ENCODE measurements at regions of chr6 and their contacts with region 1.

Region 1: DNA sequence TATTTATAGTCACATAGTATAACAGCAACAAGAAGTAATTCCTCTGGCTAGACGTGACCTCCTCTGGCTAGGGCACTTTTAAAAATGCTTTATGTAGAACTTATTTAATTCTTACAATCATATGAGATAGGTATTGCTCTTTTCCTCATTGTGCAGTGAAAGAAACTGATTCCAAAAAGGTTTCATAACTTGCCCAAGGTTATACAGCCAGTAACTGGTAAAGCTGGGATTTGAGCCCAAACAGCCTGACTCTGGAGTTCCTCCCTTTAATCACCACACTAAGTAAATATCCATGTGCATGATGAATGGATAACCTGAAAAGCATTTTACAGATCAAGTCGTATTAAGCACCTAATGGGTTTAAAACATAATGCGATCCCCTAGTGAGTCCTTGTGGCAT is 214.6 kb downstream of the PRL start:
- DNase-seq: no peak
- ATAC-seq: no peak

Region 2: DNA sequence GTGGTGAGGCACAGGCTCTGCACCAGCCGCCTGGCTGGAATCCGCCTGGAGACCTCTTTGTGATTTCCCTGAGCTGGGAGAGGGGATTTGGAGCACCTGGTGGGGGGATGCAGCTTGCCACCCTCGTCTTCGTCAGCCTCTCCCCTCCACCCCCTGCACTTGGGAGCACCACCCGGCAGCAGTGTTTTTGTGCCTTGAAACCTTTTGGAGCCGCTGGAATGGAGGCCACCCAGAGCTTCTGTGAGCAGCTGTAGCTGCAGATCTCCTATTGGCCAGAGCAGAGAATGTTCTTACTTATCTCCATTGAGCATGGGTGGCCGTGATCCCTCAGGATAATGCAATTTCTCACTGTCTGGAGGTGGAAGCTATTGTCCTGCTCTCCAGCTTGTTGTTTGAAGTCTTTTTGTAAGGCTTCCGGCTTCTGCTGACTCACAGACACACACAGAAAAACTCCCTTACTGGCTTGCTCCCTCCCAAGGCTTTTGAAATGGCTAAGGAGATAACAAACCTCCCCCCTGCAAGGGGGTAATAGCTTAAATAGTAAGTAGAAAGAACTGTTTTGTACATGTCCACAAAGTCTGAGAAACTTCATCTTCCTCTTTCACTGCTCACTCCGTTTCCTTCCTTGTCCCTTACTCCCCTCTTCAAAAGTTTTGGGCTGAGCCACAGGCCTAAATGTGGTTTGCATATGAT is 56.6 kb before region 1 on chr6:
- intact Hi-C with region 1: loop called (anchors 2 kb)
- DNase-seq: no peak
- ATAC-seq: peak; percentile 37

Region 3: GRCh38 chr6:22513667-22514066 is 431.4 kb after region 1 on chr6:
- intact Hi-C with region 1: no loop called
- DNase-seq: no peak
- ATAC-seq: no peak

Measured in Right ventricle myocardium inferior (tissue), 1 donor.